ENCODE measurements at regions of chr11 and their contacts with region 1.

Region 1: DNA sequence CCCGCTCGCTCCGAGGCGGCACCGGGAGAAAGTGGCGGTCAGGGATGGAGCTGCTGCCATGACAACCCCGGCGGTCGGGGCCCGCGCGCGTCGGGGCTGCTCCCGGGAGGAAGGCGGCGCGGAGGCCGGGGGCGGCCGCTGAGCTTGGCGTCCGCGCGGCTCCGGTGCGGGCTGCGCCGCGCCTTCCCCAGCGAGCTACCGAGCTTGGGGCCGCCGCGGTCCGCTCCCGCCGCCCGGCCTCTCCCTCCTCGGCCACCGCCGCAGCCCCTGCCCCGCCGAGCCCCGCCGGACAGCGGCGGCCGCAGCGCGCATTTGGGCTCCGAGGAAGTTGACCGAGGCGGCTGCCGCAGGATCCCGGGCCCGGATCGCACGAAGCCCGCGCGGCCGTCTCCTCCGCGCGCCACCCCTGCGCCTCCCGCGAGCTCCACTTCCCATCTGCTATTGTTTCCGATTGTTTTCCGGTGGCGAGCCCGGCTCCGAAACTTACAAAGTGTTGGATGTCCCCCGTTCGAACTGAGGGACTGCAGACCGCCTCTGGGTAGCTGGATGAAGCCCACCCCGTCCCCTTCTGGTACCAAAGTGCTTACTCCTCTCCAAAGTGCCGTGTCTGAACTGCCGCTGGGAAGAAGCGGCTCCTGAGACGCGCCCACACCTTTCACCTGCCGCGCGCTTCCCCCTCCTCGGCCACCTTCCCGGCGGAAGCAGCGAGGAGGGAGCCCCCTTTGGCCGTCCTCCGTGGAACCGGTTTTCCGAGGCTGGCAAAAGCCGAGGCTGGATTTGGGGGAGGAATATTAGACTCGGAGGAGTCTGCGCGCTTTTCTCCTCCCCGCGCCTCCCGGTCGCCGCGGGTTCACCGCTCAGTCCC is 540.3 kb downstream of the NTM start:
- DNase-seq: peak; percentile 73
- H3K4me3 ChIP-seq: peak overlapping the region; percentile 60 to 95
- H3K27ac ChIP-seq: peak overlapping the region in 1 of 2 experiments; percentile 80; a peak in 2 of 4 replicates
- H3K4me1 ChIP-seq: peaks cover 3 to 42% of the 10 kb centered on the region in 2 experiments; a peak in 2 of 4 replicates
- H3K27me3 ChIP-seq: no peaks in the 10 kb centered on the region
- CTCF ChIP-seq: no peak
- EP300 ChIP-seq: no peak
- RAD21 ChIP-seq: no peak

Region 2: DNA sequence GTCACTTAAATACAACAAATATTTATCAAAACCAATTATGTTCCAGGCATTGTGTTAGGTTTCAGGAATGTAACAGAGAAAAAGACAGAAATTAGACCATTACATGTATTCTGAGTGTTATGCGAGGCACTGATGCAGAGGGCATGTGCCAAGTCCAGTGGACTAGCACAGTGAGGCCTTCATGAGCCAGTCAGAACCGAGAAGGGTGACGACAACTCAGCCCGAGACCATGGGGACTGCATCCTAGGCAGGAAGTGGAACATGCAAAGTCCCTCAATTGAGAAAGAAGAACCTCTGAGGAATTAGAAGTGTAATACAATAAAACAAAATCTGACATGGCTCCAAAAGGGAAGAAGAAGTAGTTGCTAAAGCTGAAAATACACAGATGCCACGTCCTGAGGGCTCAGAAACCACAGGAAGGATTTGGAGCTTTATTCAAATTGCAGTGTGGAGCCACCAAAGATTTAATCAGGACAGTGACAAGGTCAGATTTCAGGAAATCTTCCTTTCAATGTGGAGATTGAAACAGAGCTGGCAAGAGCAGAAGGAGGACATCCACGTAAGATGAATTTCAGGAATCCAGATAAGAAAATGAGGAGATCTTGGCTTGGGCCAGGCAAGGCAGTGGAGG is 10.7 kb before region 1 on chr11:
- CTCF ChIA-PET with region 1: interaction called, 15 read pairs
- POLR2A ChIA-PET with region 1: no interaction called
- DNase-seq: peak; percentile 39
- H3K4me3 ChIP-seq: no peak overlapping the region
- H3K27ac ChIP-seq: peak overlapping the region in 1 of 2 experiments; percentile 42; a peak in 2 of 4 replicates
- H3K4me1 ChIP-seq: peaks cover 6 to 38% of the 10 kb centered on the region in 2 experiments
- H3K27me3 ChIP-seq: no peaks in the 10 kb centered on the region
- CTCF ChIP-seq: no peak
- EP300 ChIP-seq: peak; percentile 10 to 51; a peak in 1 of 4 replicates
- RAD21 ChIP-seq: no peak

Region 3: DNA sequence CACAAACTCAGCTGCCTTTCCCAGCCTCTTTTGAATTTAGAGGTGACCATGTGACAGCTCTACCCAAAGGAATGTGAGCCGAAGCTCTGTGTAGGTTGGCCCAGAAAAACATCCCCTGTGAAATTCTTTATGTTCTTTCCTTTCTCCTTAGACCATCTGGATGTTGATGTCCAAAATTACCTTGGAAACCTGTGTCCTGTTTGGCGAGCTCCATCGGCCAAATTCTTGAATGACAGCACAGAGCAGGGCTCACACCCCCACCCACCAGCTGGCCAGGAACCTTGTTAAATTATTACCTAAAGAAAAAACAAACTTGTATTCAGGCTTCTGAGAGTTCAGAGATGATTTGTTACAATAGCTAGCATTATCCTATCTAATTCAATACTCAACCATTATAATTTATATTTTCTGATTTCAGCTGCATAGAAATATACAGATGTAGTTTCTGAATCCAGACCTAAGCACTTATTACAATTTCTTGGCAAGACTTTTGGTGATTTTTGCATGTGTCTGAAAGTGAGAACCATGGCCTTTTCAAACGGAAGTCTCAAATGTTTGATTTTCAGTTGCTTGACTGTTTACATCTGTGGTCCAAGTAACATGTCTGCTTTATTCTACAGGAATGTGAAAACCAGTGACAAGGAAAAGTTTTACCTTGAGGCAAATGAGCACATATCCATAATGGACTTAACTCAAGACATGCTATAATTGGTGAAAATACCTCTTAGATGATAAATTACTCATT is 13.9 kb after region 1 on chr11:
- CTCF ChIA-PET with region 1: interaction called, 10 read pairs
- POLR2A ChIA-PET with region 1: no interaction called
- DNase-seq: no peak
- H3K4me3 ChIP-seq: no peak overlapping the region
- H3K27ac ChIP-seq: peak overlapping the region in 1 of 2 experiments; percentile 20; a peak in 2 of 4 replicates
- H3K4me1 ChIP-seq: peaks cover 0 to 4% of the 10 kb centered on the region in 2 experiments; a peak in 3 of 4 replicates
- H3K27me3 ChIP-seq: no peaks in the 10 kb centered on the region
- CTCF ChIP-seq: no peak
- EP300 ChIP-seq: no peak
- RAD21 ChIP-seq: no peak

Region 4: GRCh38 chr11:131998020-131998419 is 87.3 kb after region 1 on chr11:
- CTCF ChIA-PET with region 1: no interaction called
- POLR2A ChIA-PET with region 1: no interaction called
- DNase-seq: no peak
- H3K4me3 ChIP-seq: no peak overlapping the region
- H3K27ac ChIP-seq: no peak overlapping the region
- H3K4me1 ChIP-seq: no peaks in the 10 kb centered on the region
- H3K27me3 ChIP-seq: no peaks in the 10 kb centered on the region
- CTCF ChIP-seq: no peak
- EP300 ChIP-seq: no peak
- RAD21 ChIP-seq: no peak

Region 5: DNA sequence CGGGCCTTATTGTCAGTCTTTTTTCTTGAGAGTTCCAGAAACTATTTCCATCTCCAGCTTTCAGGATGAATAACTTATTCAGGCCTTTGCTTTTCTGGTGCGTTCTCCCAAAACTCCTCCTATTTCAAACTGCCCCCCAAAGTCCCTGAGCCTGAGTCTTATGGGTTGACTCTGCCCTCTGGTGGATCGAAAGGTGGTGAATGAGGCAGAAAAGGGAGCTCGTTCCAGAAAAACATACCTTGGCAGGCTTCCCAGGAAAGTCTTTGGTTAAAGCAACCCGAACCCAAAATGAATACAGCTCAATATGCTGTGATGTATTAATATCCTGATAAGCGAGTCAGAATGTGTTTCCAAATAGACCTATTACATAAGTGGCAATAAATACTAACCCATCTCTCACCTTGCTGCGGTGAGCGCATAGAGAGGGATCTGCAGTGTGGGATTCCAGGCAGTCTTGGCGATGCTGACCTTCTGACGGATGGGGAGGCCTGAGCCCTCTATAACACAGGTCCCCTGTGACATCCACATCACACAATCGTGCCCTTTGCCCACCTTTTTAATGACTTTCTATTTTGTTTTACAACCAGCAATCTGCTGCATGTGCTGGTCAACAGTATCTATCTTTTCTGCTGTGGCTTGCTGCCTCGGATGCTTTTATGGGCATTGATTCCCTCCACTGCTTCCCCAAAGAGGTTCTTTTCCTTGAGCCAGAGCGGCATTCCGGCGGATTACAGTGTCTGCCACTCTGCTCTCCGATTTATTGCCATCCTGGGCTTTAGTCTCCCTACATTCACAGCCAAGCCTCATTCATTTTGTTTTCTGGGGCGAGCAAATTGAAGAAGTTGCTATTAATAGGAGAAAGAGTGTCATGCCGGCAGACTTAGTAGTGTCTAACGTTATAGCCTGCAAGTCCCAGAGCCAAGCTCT is 216.5 kb after region 1 on chr11:
- CTCF ChIA-PET with region 1: interaction called, 11 read pairs
- POLR2A ChIA-PET with region 1: no interaction called
- DNase-seq: peak; percentile 66
- H3K4me3 ChIP-seq: no peak overlapping the region
- H3K27ac ChIP-seq: peak overlapping the region in 1 of 2 experiments; percentile 69; a peak in 1 of 4 replicates
- H3K4me1 ChIP-seq: peaks cover 0 to 10% of the 10 kb centered on the region in 2 experiments; a peak in 2 of 4 replicates
- H3K27me3 ChIP-seq: no peaks in the 10 kb centered on the region
- CTCF ChIP-seq: peak; percentile 89
- EP300 ChIP-seq: no peak
- RAD21 ChIP-seq: peak; percentile 82